Activated CD8-positive, alpha-beta T cell treated with anti-CD3 and anti-CD28 coated beads for 36 hours (primary cell): ENCODE measurements at regions of chr7 and their contacts with region 1.

Region 1: GRCh38 chr7:74068393-74069085 is 15.1 kb upstream of the LIMK1 start:
- DNase-seq: no peak
- ATAC-seq: no peak
- H3K4me3 Mint-ChIP-seq: no peak overlapping the region
- H3K27ac Mint-ChIP-seq: no peak overlapping the region
- H3K4me1 Mint-ChIP-seq: no peaks in the 10 kb centered on the region
- H3K27me3 Mint-ChIP-seq: no peaks in the 10 kb centered on the region
- CTCF ChIP-seq: no peak

Region 2: GRCh38 chr7:74083117-74083876 is 14.8 kb after region 1 on chr7 and contains the start of gene LIMK1:
- CTCF ChIA-PET with region 1: interaction called, 17 read pairs
- POLR2A ChIA-PET with region 1: interaction called, 4 read pairs
- intact Hi-C with region 1: no loop called
- DNase-seq: peak; percentile 80
- ATAC-seq: peak; percentile 95
- H3K4me3 Mint-ChIP-seq: peak within 1 kb of the TSS; percentile 83
- H3K27ac Mint-ChIP-seq: peak within 1 kb of the TSS; percentile 86
- H3K4me1 Mint-ChIP-seq: peaks cover 8% of the 10 kb centered on the region
- H3K27me3 Mint-ChIP-seq: no peaks in the 10 kb centered on the region
- CTCF ChIP-seq: no peak
- total RNA-seq, gene LIMK1: 17.8 to 20.8 TPM

Region 3: DNA sequence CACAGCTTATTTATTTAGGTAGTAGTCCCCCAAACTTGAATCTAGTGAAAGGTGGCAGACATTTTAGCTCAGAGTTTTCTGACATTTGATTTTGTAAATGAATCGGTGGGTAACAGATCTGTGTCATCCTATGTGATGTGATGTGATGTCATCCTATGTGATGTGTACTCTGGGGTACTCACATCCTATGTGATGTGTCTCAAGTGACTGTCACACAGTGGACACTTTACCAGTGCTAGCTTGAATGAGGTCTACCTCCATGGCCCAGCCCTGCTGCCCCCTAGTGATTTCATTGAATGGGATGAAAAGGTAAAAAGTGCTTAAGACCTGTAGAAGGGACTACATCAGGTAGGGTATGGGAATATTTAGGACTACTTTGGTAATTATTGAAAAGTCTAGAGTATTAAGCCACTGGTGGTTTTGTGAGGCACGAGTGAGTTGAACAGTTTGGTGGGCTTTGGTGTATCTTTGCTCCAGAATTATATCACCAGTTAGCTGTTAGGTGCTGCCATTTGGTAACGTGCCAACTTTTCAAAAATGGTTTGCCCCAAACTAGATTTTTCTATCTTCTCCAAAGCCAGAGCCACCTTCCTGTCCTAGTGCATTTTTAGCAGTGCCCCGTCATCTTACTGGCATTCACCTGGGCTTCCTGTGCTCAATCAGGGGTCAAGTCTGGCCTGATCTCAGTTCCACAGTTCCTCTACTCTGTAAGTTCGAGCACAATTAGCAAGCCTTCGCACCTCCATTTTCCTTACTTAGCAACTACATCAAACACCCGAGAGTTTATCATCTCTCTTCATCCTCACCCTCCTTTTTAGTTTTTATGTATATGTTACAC is 115.3 kb after region 1 on chr7:
- CTCF ChIA-PET with region 1: interaction called, 14 read pairs
- POLR2A ChIA-PET with region 1: interaction called, 6 read pairs
- intact Hi-C with region 1: loop called (anchors 5 kb)
- DNase-seq: peak; percentile 56
- ATAC-seq: peak; percentile 90
- H3K4me3 Mint-ChIP-seq: no peak overlapping the region
- H3K27ac Mint-ChIP-seq: peak overlapping the region; percentile 36
- H3K4me1 Mint-ChIP-seq: peaks cover 70% of the 10 kb centered on the region
- H3K27me3 Mint-ChIP-seq: no peaks in the 10 kb centered on the region
- CTCF ChIP-seq: peak; percentile 41